Right lobe of liver (tissue), 6 donors: ENCODE measurements at regions of chr1 and their contacts with region 1.

Region 1: GRCh38 chr1:11719313-11720032 is 16.5 kb upstream of the AGTRAP start:
- DNase-seq: peak; percentile 77 to 84 (median 77)
- ATAC-seq: peak; percentile 86 to 96 (median 90)
- H3K4me3 ChIP-seq: peak overlapping the region; percentile 26 to 36 (median 27)
- H3K27ac ChIP-seq: peak overlapping the region in 1 of 3 donors; percentile 36
- H3K4me1 ChIP-seq: peaks cover 0 to 4% (median 0%) of the 10 kb centered on the region in 4 donors
- H3K27me3 ChIP-seq: no peaks in the 10 kb centered on the region
- CTCF ChIP-seq: peak; percentile 92 to 96 (median 96)
- POLR2A ChIP-seq: no peak

Region 2: GRCh38 chr1:11645670-11646265 is 73.7 kb before region 1 on chr1:
- intact Hi-C with region 1: loop called (anchors 5 kb)
- DNase-seq: peak; percentile 78 to 85 (median 82)
- ATAC-seq: peak in 1 of 4 donors; percentile 14
- H3K4me3 ChIP-seq: no peak overlapping the region
- H3K27ac ChIP-seq: no peak overlapping the region
- H3K4me1 ChIP-seq: peaks cover 0 to 17% (median 5%) of the 10 kb centered on the region in 4 donors
- H3K27me3 ChIP-seq: no peaks in the 10 kb centered on the region
- CTCF ChIP-seq: peak; percentile 53 to 83 (median 80)
- POLR2A ChIP-seq: no peak